Transverse colon (tissue), 4 donors: ENCODE measurements at regions of chr5 and their contacts with region 1.

Region 1: DNA sequence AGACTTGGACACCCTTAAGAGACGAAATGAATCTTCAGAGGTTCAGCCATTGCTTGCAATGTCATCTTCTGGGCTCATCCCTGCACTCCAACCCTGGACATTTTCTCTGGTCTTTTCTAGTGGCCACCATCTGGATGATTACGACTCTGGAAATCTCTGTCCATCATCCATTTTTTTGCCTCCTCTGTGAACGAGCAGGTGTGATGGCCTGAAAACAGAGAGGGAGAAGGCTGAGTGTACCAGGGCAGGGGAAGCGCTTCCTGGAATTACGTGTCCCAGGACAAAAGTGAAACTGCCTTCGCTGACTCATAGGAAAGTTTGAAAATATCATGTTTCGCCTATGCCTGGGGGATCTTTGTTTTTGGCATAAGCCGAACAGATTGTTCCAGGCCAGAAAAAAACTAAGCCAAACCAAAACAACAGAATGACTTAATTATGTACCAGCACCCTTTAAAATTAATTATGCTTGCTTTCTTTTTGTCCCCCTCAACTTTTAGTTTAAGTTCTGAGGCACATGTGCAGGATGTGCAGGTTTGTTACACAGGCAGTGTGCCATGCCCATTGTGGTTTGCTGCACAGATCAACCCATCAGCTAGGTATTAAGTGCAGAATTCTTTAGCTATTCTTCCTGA is 31.9 kb downstream of the ANKRD33B start:
- DNase-seq: no peak
- H3K4me3 ChIP-seq: no peak overlapping the region
- H3K27ac ChIP-seq: peak overlapping the region; percentile 50 to 63 (median 58)
- H3K4me1 ChIP-seq: peaks cover 0 to under 1% (median 0%) of the 10 kb centered on the region in 4 donors
- H3K27me3 ChIP-seq: no peaks in the 10 kb centered on the region
- CTCF ChIP-seq: no peak
- EP300 ChIP-seq: no peak
- POLR2A ChIP-seq: no peak

Region 2: DNA sequence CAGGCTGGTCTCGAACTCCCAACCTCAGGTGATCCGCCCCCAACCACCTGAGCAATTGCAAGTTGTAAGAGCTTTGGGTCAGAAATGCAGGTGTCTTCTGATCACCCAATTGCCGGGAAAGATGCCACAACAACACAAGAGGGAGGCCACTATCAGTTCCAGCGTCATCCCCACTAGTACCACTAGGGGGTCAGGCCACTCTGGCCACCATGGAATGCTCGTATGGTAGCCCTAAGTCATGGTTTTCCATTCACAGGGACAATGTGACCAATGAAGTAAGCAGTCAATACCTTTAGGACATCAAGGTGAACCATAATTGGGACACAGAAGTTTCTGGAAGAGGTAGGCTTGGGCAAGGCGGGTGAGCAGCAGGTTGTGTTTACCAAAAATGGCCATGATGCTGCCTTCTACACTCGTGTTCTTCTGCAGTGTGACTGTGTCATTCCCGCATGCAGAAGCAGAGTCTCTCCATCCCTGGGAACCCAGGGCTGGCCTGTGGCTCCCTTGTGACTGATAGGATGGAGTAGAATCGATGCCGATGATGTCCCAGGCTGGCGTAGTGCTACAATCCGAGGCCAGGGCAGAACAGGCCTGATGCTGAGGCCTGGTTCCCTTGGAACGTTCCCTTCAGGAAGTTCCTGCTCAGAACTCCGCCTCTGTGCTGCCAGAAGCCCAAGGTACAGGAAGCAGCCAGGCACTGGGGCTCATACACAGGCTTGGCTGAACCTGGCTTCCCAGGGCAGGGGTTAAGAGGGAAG is 74.1 kb before region 1 on chr5:
- in situ Hi-C with region 1: no loop called
- intact Hi-C with region 1: no loop called
- DNase-seq: no peak
- H3K4me3 ChIP-seq: no peak overlapping the region
- H3K27ac ChIP-seq: no peak overlapping the region
- H3K4me1 ChIP-seq: no peaks in the 10 kb centered on the region
- H3K27me3 ChIP-seq: no peaks in the 10 kb centered on the region
- CTCF ChIP-seq: no peak
- EP300 ChIP-seq: no peak
- POLR2A ChIP-seq: no peak

Region 3: DNA sequence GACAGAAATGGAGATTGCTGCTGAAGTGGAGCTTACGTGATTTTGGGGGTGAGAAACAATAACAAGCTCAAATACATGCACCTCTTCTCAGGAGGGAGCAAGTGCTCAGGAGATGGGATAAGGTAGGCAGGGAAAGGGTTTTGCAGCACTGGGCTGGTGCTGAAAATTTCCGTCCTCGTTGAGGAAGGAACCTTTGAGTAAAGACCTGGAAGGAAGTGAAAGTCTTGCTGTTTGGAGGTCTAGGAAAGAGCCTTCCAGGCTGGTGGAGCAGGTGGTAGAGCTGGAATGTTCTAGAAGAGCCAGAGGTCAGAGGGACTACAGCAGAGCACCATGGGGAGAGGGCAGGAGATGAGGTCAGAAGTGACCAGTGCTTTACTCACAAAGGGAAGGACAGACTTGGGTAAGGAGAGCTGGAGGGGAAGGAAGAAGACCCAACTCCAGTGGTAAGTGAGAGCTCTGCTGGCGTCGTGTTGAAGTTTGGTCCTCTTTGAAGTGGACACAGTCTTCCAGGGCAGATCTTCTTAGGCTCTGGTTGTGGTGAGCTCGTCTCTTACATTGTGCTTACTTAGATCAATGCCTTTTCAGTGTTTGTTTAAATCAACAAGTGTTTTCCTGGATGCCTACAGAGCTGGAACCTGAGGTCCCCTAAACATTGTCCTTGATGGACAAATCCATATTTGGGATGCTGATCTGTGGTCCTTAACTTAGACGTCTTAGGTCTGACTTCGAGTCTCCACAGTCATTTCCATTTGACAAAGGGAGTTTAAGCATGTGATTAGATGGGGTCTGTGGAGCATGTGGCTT is 10.9 kb before region 1 on chr5:
- in situ Hi-C with region 1: no loop called
- intact Hi-C with region 1: loop called (anchors 1 kb)
- DNase-seq: no peak
- H3K4me3 ChIP-seq: no peak overlapping the region
- H3K27ac ChIP-seq: no peak overlapping the region
- H3K4me1 ChIP-seq: no peaks in the 10 kb centered on the region
- H3K27me3 ChIP-seq: peaks cover 4% of the 10 kb centered on the region
- CTCF ChIP-seq: no peak
- EP300 ChIP-seq: no peak
- POLR2A ChIP-seq: no peak

Region 4: GRCh38 chr5:10789021-10789420 is 193.2 kb after region 1 on chr5:
- in situ Hi-C with region 1: no loop called
- intact Hi-C with region 1: no loop called
- DNase-seq: peak; percentile 10
- H3K4me3 ChIP-seq: no peak overlapping the region
- H3K27ac ChIP-seq: peak overlapping the region in 3 of 4 donors; percentile 6 to 13 (median 10)
- H3K4me1 ChIP-seq: no peaks in the 10 kb centered on the region
- H3K27me3 ChIP-seq: no peaks in the 10 kb centered on the region
- CTCF ChIP-seq: no peak
- EP300 ChIP-seq: no peak
- POLR2A ChIP-seq: no peak